ENCODE measurements at regions of chr9 and their contacts with region 1.

Region 1: GRCh38 chr9:98215821-98216220 is 23.4 kb upstream of the CORO2A start:
- DNase-seq: peak; percentile 82
- H3K4me3 ChIP-seq: no peak overlapping the region
- H3K27ac ChIP-seq: no peak overlapping the region
- H3K4me1 ChIP-seq: no peaks in the 10 kb centered on the region
- H3K27me3 ChIP-seq: no peaks in the 10 kb centered on the region
- CTCF ChIP-seq: peak; percentile 58
- EP300 ChIP-seq: no peak
- RAD21 ChIP-seq: peak; percentile 73

Region 2: GRCh38 chr9:98074115-98074990 is 141.5 kb before region 1 on chr9:
- CTCF ChIA-PET with region 1: interaction called, 18 read pairs
- POLR2A ChIA-PET with region 1: no interaction called
- DNase-seq: peak; percentile 79
- H3K4me3 ChIP-seq: no peak overlapping the region
- H3K27ac ChIP-seq: no peak overlapping the region; a peak in 1 of 4 replicates
- H3K4me1 ChIP-seq: no peaks in the 10 kb centered on the region; a peak in 2 of 4 replicates
- H3K27me3 ChIP-seq: no peaks in the 10 kb centered on the region
- CTCF ChIP-seq: peak; percentile 96
- EP300 ChIP-seq: no peak
- RAD21 ChIP-seq: peak; percentile 91

Region 3: DNA sequence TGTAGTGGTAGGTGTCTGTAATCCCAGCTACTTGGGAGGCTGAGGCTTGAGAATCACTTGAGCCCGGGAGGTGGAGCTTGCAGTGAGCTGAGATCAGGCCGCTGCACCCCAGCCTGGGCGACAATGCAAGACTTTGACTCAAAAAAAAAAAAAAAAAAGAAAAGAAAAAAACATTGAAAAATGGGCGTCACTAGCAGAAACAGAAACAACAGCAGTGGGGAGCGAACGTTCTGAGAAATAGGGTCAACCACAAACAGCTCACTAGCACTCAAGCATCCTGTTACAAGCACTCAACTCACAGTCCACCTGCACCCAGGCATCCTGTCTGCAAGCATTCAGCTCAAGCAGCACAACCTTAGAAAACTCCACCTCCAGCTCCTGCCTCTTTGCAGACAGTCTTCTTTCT is 114.0 kb before region 1 on chr9:
- CTCF ChIA-PET with region 1: no interaction called
- POLR2A ChIA-PET with region 1: no interaction called
- DNase-seq: no peak
- H3K4me3 ChIP-seq: no peak overlapping the region
- H3K27ac ChIP-seq: no peak overlapping the region
- H3K4me1 ChIP-seq: peaks cover 0 to 3% of the 10 kb centered on the region in 2 experiments; a peak in 1 of 4 replicates
- H3K27me3 ChIP-seq: no peaks in the 10 kb centered on the region
- CTCF ChIP-seq: no peak
- EP300 ChIP-seq: no peak
- RAD21 ChIP-seq: no peak

Region 4: DNA sequence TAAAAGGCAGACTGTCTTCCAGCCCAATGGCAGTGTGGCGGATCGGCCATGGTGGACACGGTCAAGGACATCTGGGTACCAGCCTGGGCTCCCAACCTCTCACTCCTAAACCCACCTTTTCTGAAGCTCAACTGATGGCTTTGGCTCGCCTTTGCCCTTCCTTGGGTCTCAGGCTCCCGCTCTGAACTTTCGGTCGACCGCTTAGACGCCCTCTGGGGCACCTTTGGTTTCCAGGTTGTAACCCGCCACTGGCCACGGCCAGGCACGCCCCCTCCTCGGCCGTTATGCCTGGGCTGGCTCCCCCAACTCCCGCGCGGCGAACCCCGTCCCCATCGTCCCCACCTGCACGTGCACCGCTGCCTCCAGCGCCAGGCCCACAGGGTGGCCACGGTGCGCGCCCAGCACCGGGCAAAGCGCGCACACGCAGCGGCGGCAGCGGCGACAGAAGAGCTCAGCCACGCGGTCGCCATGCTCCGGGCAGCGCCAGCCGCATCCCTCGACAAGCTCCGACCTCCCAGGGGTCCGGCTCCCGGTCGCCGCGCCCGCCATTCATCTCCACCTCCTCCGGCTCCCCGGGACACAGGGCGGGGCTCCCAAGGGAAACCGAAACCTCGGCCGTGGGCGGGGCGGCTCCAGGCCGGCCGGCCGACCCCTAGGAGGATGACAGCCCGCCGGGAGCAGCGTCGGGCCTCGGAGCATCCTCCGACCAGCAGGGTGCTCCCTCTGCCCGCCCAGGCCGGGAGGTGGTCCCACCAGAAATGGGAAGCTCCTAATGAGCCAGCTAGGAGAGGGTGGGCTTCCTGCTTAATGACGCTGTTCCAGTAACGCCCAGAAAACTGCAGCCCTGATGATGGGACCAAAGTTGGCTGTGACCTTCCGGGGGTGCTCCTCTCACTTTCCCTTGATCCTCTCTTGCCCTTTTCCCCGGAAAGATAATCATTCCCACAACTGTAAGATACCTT is 96.9 kb before region 1 on chr9 and contains the start of gene TRIM14:
- CTCF ChIA-PET with region 1: interaction called, 19 read pairs
- POLR2A ChIA-PET with region 1: no interaction called
- DNase-seq: peak; percentile 90
- H3K4me3 ChIP-seq: peak within 1 kb of the TSS; percentile 64 to 65
- H3K27ac ChIP-seq: peak within 1 kb of the TSS; percentile 21 to 30; a peak in 2 of 4 replicates
- H3K4me1 ChIP-seq: peaks cover 0 to 30% of the 10 kb centered on the region in 2 experiments; a peak in 3 of 4 replicates
- H3K27me3 ChIP-seq: no peaks in the 10 kb centered on the region
- CTCF ChIP-seq: peak; percentile 38
- EP300 ChIP-seq: no peak
- RAD21 ChIP-seq: peak; percentile 51
- polyA plus RNA-seq, gene TRIM14: 13.4 and 15.3 TPM in 2 replicates

Region 5: GRCh38 chr9:98341157-98342097 is 125.6 kb after region 1 on chr9:
- CTCF ChIA-PET with region 1: no interaction called
- POLR2A ChIA-PET with region 1: no interaction called
- DNase-seq: no peak
- H3K4me3 ChIP-seq: no peak overlapping the region
- H3K27ac ChIP-seq: no peak overlapping the region
- H3K4me1 ChIP-seq: peaks cover 0 to 2% of the 10 kb centered on the region in 2 experiments; a peak in 1 of 4 replicates
- H3K27me3 ChIP-seq: peaks cover 7% of the 10 kb centered on the region; the same call in 1 of the 2 replicates
- CTCF ChIP-seq: no peak
- EP300 ChIP-seq: no peak
- RAD21 ChIP-seq: no peak

Measured in SK-N-SH (cell line).